ENCODE measurements at regions of chr16 and their contacts with region 1.

Region 1: GRCh38 chr16:15427648-15428239 is 6.6 kb upstream of the BMERB1 start:
- DNase-seq: peak; percentile 82
- H3K4me3 ChIP-seq: no peak overlapping the region
- H3K27ac ChIP-seq: no peak overlapping the region
- H3K4me1 ChIP-seq: no peaks in the 10 kb centered on the region
- H3K27me3 ChIP-seq: peaks cover 0 to 4% of the 10 kb centered on the region in 2 experiments
- CTCF ChIP-seq: peak; percentile 60 to 61
- POLR2A ChIP-seq: no peak

Region 2: DNA sequence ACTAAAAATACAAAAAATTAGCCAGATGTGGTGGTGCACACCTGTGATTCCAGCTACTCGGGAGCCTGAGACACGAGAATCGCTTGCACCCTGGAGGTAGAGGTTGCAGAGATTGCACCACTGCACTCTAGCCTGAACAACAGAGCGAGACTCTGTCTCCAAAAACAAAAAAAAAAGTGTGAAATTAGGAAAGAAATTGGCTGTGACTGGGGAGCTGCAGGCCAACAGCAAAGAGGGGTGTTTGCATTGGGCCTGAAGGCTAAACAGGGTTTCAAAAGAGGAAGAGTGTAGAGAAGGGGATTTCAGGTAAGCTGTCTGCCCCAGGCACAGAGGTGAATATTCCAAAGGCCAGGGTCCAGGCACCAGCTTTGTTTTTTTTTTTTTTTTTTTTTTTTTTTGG is 16.0 kb after region 1 on chr16:
- CTCF ChIA-PET with region 1: interaction called, 15 read pairs
- POLR2A ChIA-PET with region 1: interaction called, 3 read pairs
- dilution Hi-C with region 1: no loop called
- intact Hi-C with region 1: no loop called
- DNase-seq: no peak
- H3K4me3 ChIP-seq: no peak overlapping the region
- H3K27ac ChIP-seq: no peak overlapping the region
- H3K4me1 ChIP-seq: peaks cover 3% of the 10 kb centered on the region
- H3K27me3 ChIP-seq: no peaks in the 10 kb centered on the region
- CTCF ChIP-seq: no peak
- POLR2A ChIP-seq: no peak

Region 3: DNA sequence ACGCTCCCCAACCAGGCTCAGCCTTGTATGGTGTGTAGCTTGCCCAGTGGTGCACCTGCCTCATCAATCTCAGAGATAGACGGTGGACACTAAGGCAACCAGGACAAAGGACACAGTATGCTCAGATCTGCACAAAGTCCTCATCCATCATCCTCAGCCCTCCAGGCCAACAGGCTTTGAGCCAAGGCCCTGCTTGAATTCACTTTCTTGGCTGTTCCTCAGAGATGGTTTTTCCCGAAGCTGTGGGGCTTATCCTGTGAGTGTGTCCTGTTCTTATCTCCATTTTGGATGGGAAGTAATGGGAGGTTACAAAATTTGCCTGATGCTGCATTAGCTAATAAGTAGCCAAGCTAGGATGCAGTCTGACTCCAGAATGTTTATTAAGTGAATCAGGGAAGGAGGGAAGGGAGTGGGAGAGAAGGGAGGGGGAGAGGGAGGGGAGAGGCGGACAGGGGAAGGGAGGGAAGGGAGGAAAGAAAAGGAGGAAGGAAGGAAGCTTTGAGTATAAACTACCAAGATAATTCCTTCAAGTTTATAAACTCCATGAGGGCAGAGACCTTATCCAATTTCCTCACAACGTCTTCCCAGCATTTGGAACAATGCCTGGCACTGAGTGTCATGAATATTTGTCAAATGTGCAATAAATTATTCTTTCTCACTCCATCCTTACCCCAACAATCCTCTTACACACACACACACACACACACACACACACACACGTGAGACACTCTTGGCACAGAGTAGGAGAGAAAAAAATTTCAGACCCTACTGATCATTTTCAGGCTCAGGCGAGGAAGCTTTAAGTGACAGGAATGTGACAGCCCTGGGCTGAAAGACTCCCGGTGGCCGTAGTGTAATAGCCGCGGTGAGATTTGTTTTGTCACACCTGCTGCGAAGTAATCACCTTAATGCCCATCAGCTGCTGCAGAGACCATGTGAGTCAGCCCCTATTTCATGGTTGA is 90.9 kb after region 1 on chr16:
- CTCF ChIA-PET with region 1: interaction called, 10 read pairs
- POLR2A ChIA-PET with region 1: no interaction called
- dilution Hi-C with region 1: no loop called
- intact Hi-C with region 1: no loop called
- DNase-seq: peak; percentile 85
- H3K4me3 ChIP-seq: no peak overlapping the region
- H3K27ac ChIP-seq: no peak overlapping the region
- H3K4me1 ChIP-seq: peaks cover 25% of the 10 kb centered on the region
- H3K27me3 ChIP-seq: no peaks in the 10 kb centered on the region
- CTCF ChIP-seq: no peak
- POLR2A ChIP-seq: no peak

Region 4: GRCh38 chr16:15592324-15592723 is 164.6 kb after region 1 on chr16:
- CTCF ChIA-PET with region 1: interaction called, 4 read pairs
- POLR2A ChIA-PET with region 1: no interaction called
- dilution Hi-C with region 1: no loop called
- intact Hi-C with region 1: loop called (anchors 1 kb)
- DNase-seq: no peak
- H3K4me3 ChIP-seq: no peak overlapping the region
- H3K27ac ChIP-seq: no peak overlapping the region
- H3K4me1 ChIP-seq: peaks cover 17% of the 10 kb centered on the region
- H3K27me3 ChIP-seq: no peaks in the 10 kb centered on the region
- CTCF ChIP-seq: no peak
- POLR2A ChIP-seq: no peak

Region 5: DNA sequence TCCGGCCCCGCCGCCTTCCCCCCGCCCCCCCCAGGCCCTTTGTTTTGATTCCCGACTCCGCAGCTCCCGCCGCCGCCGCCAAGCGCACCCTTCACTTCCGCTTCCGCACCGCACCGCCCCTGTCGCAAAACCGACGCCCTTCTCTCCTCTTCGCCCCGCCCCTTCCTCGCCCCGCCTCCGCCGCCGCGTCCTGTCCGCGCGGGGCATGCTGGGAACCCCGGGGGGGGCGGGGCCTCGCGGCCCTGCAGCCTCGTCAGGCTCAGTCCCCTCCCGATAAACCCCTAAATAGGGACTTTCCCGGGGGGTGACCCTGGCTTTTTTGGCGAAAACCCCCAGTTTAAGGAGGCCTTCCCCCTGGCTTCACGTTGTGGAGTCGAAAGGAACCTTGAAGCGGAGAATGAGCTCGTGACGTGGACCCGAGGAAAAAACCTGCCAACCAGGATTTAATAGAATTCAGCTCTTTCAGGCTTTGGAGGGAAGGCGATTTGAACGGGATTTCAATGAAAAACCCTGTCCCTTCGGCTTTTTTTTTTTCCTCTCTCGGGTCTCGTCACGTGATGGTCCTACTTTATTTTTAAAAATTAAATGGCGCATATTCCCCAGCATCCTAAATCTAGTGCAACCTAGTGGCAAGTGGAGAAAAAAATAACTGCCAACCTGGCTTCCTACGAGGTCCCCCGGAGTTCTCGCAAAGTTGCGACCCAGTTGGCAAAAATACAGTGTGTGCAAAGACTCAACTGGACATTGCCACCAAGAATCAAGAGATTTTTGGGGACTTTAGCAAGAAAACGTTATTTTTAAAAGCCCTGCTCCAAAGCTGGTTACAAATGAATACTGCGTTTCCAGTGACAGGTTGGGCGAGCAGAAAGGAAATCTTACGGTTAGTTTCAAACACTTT is 215.6 kb after region 1 on chr16 and contains the start of gene MARF1:
- CTCF ChIA-PET with region 1: interaction called, 5 read pairs
- POLR2A ChIA-PET with region 1: no interaction called
- dilution Hi-C with region 1: no loop called
- intact Hi-C with region 1: loop called (anchors 1 kb)
- DNase-seq: peak; percentile 94
- H3K4me3 ChIP-seq: peak within 1 kb of the TSS; percentile 61 to 98 (median 95)
- H3K27ac ChIP-seq: peak within 1 kb of the TSS; percentile 99
- H3K4me1 ChIP-seq: peaks cover 18% of the 10 kb centered on the region
- H3K27me3 ChIP-seq: peaks cover 0 to 2% of the 10 kb centered on the region in 2 experiments
- CTCF ChIP-seq: peak; percentile 32 to 42
- POLR2A ChIP-seq: peak; percentile 94
- total RNA-seq, gene MARF1: 54.3 and 58.5 TPM in 2 replicates

Region 6: DNA sequence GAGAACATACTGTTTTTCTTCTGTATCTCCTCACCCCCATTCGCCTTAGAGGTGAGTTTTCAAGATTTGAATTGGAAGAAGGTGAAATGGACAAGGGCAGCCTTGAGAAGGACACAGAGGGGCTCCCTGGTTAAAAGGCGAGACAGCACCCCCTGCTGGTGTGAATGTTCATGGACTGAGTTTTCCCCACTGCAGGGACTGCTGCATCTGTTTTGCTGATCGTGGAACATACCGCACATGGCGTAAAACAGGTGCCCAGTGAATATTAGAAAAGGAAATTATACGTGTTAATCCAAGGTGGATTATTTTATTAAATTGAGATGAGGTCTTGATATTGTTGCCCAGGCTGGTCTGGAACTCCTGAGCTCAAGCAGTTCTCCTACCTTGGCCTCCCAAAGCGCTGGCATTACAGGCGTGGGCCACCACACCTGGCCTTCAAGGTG is 276.8 kb after region 1 on chr16:
- CTCF ChIA-PET with region 1: interaction called, 14 read pairs
- POLR2A ChIA-PET with region 1: no interaction called
- dilution Hi-C with region 1: no loop called
- intact Hi-C with region 1: loop called (anchors 1 kb)
- DNase-seq: peak; percentile 73
- H3K4me3 ChIP-seq: no peak overlapping the region
- H3K27ac ChIP-seq: no peak overlapping the region
- H3K4me1 ChIP-seq: peaks cover 28% of the 10 kb centered on the region
- H3K27me3 ChIP-seq: no peaks in the 10 kb centered on the region
- CTCF ChIP-seq: peak; percentile 79 to 87
- POLR2A ChIP-seq: no peak